Natural killer cell (primary cell): ENCODE measurements at regions of chr14 and their contacts with region 1.

Region 1: GRCh38 chr14:24332268-24332993 is 2.4 kb downstream of the ADCY4 start:
- DNase-seq: peak; percentile 70 to 96
- ATAC-seq: peak; percentile 57 to 75 (median 59)
- H3K4me3 ChIP-seq: peak overlapping the region; percentile 27
- H3K4me3 Mint-ChIP-seq: peak overlapping the region; percentile 93
- H3K27ac ChIP-seq: no peak overlapping the region
- H3K27ac Mint-ChIP-seq: peak overlapping the region; percentile 87 to 88
- H3K4me1 ChIP-seq: peaks cover 80% of the 10 kb centered on the region
- H3K4me1 Mint-ChIP-seq: peaks cover 79 to 84% of the 10 kb centered on the region in 2 donors
- H3K27me3 ChIP-seq: peaks cover 15% of the 10 kb centered on the region
- H3K27me3 Mint-ChIP-seq: peaks cover 14 to 16% of the 10 kb centered on the region in 2 donors
- CTCF ChIP-seq: peak; percentile 85

Region 2: DNA sequence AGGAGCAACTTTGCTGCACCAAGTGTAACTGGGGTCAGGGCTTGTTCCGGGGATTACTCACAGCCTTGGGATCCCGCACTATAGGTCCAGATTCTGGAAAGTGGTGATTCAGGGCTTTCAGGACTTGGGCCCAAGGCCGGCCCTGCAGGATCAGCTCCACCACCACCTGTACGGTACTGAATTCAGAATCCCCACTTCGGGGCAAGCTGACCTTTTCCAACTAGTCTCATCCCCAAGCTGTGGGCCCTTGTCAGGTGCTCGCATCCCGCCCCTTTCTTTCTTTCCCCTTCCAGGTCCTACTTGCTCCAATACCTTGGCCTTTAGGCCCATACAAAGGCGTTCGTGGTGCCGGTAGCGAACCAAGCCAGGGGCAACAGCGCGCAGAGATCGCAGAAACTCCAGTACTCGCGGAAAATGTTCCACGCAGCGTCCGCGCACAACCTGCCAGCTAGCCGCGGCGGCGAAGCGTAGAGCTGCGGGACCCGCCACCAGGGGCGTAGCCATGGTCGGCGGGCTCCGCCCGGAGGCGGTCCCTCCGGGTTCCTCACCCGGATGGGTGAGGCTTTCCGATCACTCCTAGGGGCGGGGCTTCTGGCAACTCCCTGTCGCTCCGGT is 90.5 kb before region 1 on chr14:
- intact Hi-C with region 1: loop called (anchors 1 kb)
- DNase-seq: peak; percentile 92 to 97
- ATAC-seq: peak; percentile 79 to 92 (median 79)
- H3K4me3 ChIP-seq: peak overlapping the region; percentile 74
- H3K4me3 Mint-ChIP-seq: peak overlapping the region; percentile 98
- H3K27ac ChIP-seq: peak overlapping the region; percentile 97
- H3K27ac Mint-ChIP-seq: peak overlapping the region; percentile 100
- H3K4me1 ChIP-seq: peaks cover 41% of the 10 kb centered on the region
- H3K4me1 Mint-ChIP-seq: peaks cover 61 to 71% of the 10 kb centered on the region in 2 donors
- H3K27me3 ChIP-seq: no peaks in the 10 kb centered on the region
- H3K27me3 Mint-ChIP-seq: no peaks in the 10 kb centered on the region
- CTCF ChIP-seq: peak; percentile 39

Region 3: GRCh38 chr14:24289649-24290249 is 42.7 kb before region 1 on chr14:
- intact Hi-C with region 1: no loop called
- DNase-seq: peak in 1 of 2 donors; percentile 53
- ATAC-seq: peak in 2 of 3 donors; percentile 21 to 55
- H3K4me3 ChIP-seq: no peak overlapping the region
- H3K4me3 Mint-ChIP-seq: no peak overlapping the region
- H3K27ac ChIP-seq: no peak overlapping the region
- H3K27ac Mint-ChIP-seq: no peak overlapping the region
- H3K4me1 ChIP-seq: peaks cover 16% of the 10 kb centered on the region
- H3K4me1 Mint-ChIP-seq: no peaks in the 10 kb centered on the region
- H3K27me3 ChIP-seq: no peaks in the 10 kb centered on the region
- H3K27me3 Mint-ChIP-seq: no peaks in the 10 kb centered on the region
- CTCF ChIP-seq: no peak

Region 4: DNA sequence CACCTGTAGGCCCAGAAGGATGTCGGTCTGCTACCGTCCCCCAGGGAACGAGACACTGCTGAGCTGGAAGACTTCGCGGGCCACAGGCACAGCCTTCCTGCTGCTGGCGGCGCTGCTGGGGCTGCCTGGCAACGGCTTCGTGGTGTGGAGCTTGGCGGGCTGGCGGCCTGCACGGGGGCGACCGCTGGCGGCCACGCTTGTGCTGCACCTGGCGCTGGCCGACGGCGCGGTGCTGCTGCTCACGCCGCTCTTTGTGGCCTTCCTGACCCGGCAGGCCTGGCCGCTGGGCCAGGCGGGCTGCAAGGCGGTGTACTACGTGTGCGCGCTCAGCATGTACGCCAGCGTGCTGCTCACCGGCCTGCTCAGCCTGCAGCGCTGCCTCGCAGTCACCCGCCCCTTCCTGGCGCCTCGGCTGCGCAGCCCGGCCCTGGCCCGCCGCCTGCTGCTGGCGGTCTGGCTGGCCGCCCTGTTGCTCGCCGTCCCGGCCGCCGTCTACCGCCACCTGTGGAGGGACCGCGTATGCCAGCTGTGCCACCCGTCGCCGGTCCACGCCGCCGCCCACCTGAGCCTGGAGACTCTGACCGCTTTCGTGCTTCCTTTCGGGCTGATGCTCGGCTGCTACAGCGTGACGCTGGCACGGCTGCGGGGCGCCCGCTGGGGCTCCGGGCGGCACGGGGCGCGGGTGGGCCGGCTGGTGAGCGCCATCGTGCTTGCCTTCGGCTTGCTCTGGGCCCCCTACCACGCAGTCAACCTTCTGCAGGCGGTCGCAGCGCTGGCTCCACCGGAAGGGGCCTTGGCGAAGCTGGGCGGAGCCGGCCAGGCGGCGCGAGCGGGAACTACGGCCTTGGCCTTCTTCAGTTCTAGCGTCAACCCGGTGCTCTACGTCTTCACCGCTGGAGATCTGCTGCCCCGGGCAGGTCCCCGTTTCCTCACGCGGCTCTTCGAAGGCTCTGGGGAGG is 21.5 kb before region 1 on chr14 and contains the start of gene LTB4R:
- intact Hi-C with region 1: loop called (anchors 1 kb)
- DNase-seq: peak; percentile 69 to 87
- ATAC-seq: peak; percentile 75 to 87 (median 81)
- H3K4me3 ChIP-seq: peak within 1 kb of the TSS; percentile 45
- H3K4me3 Mint-ChIP-seq: peak within 1 kb of the TSS; percentile 88
- H3K27ac ChIP-seq: peak within 1 kb of the TSS; percentile 84
- H3K27ac Mint-ChIP-seq: peak within 1 kb of the TSS; percentile 94 to 96
- H3K4me1 ChIP-seq: peaks cover 77% of the 10 kb centered on the region
- H3K4me1 Mint-ChIP-seq: peaks cover 71 to 92% of the 10 kb centered on the region in 2 donors
- H3K27me3 ChIP-seq: no peaks in the 10 kb centered on the region
- H3K27me3 Mint-ChIP-seq: no peaks in the 10 kb centered on the region
- CTCF ChIP-seq: peak; percentile 37
- total RNA-seq, gene LTB4R: 33.5 to 55.7 (median 49.7) TPM

Region 5: GRCh38 chr14:24431569-24432258 is 99.3 kb after region 1 on chr14:
- intact Hi-C with region 1: loop called (anchors 1 kb)
- DNase-seq: peak; percentile 82 to 96
- ATAC-seq: peak; percentile 53 to 72 (median 57)
- H3K4me3 ChIP-seq: peak overlapping the region; percentile 93
- H3K4me3 Mint-ChIP-seq: peak overlapping the region; percentile 84
- H3K27ac ChIP-seq: peak overlapping the region; percentile 99
- H3K27ac Mint-ChIP-seq: peak overlapping the region; percentile 87 to 97
- H3K4me1 ChIP-seq: peaks cover 36% of the 10 kb centered on the region
- H3K4me1 Mint-ChIP-seq: peaks cover 18 to 45% of the 10 kb centered on the region in 2 donors
- H3K27me3 ChIP-seq: no peaks in the 10 kb centered on the region
- H3K27me3 Mint-ChIP-seq: no peaks in the 10 kb centered on the region
- CTCF ChIP-seq: peak; percentile 81

Region 6: GRCh38 chr14:24690492-24690891 is 358.1 kb after region 1 on chr14:
- intact Hi-C with region 1: loop called (anchors 5 kb)
- DNase-seq: peak in 1 of 2 donors; percentile 55
- ATAC-seq: peak in 1 of 3 donors; percentile 17
- H3K4me3 ChIP-seq: no peak overlapping the region
- H3K4me3 Mint-ChIP-seq: peak overlapping the region; percentile 22
- H3K27ac ChIP-seq: no peak overlapping the region
- H3K27ac Mint-ChIP-seq: peak overlapping the region in 1 of 2 donors; percentile 78
- H3K4me1 ChIP-seq: peaks cover 57% of the 10 kb centered on the region
- H3K4me1 Mint-ChIP-seq: peaks cover 62% of the 10 kb centered on the region in 2 donors
- H3K27me3 ChIP-seq: no peaks in the 10 kb centered on the region
- H3K27me3 Mint-ChIP-seq: no peaks in the 10 kb centered on the region
- CTCF ChIP-seq: peak; percentile 40